CD14-positive monocyte (primary cell): ENCODE measurements at regions of chr11 and their contacts with region 1.

Region 1: DNA sequence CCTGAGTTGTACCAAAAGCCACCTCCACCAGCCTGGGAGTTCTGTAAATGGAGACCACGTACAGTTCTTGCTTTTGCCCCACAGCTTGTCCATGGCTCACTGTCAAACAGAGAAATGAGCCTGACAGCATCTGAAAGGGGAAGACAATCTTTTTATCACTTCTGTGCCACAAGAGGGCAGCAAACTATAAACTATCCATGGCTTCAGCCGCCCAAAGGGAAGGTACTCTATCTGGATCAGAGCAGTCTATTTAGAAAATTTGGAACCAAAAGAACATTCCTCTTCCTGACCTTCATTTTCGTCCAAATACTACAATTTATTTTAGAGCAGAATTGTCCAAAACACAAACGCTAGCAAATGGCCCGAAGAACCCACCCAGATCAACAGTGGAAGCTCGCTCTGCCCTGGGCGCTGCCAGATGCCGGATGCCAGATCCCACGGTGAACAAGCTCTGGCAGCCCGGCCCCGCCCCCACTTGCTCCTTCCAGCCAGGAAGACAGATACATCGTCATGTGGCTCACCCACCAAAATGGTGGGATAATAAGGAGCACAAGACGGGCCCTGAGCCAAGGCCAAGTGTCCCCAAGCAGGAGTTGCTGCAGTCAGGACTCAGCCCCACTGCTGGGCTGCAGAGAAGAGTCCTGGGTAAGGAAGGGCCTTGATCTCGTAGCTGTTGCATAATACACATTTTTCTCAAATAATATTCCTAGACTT is 23.9 kb upstream of the SCGB1A1 start:
- DNase-seq: peak; percentile 59 to 76 (median 69)
- H3K4me3 ChIP-seq: no peak overlapping the region
- H3K4me3 Mint-ChIP-seq: peak overlapping the region in 1 of 2 donors; percentile 52
- H3K27ac ChIP-seq: no peak overlapping the region
- H3K27ac Mint-ChIP-seq: peak overlapping the region in 2 of 7 donors; percentile 0 to 48
- H3K4me1 ChIP-seq: peaks cover 11 to 33% of the 10 kb centered on the region in 2 donors
- H3K4me1 Mint-ChIP-seq: peaks cover 37% of the 10 kb centered on the region
- H3K27me3 ChIP-seq: no peaks in the 10 kb centered on the region
- H3K27me3 Mint-ChIP-seq: peaks cover 0 to 4% (median 0%) of the 10 kb centered on the region in 3 donors
- CTCF ChIP-seq: peak; percentile 77

Region 2: DNA sequence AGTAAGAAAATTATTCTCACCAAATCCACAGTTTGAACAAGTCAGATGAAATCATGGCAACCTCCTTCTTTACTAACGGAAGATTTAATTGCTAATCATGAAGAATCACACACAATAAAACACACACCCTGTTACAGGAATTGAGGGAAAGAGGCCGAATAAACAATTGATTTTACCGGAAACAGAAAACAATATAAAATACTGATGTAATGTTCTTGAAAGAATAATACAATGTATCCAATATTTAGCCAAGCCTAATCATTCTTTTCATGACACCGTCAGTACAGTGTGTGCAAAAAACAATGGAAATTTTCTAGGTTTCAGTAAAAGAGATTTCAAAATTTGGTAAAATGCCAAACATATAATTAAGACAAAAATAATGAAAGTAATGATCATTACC is 34.3 kb before region 1 on chr11:
- intact Hi-C with region 1: no loop called
- DNase-seq: no peak
- H3K4me3 ChIP-seq: no peak overlapping the region
- H3K4me3 Mint-ChIP-seq: no peak overlapping the region
- H3K27ac ChIP-seq: no peak overlapping the region
- H3K27ac Mint-ChIP-seq: no peak overlapping the region
- H3K4me1 ChIP-seq: no peaks in the 10 kb centered on the region
- H3K4me1 Mint-ChIP-seq: no peaks in the 10 kb centered on the region
- H3K27me3 ChIP-seq: no peaks in the 10 kb centered on the region
- H3K27me3 Mint-ChIP-seq: peaks cover 0 to 1% (median 0%) of the 10 kb centered on the region in 3 donors
- CTCF ChIP-seq: no peak

Region 3: GRCh38 chr11:62689421-62690183 is 294.6 kb after region 1 on chr11 and contains the start of gene LRRN4CL:
- intact Hi-C with region 1: loop called (anchors 5 to 10 kb)
- DNase-seq: no peak
- H3K4me3 ChIP-seq: no peak within 1 kb of the TSS
- H3K4me3 Mint-ChIP-seq: peak within 1 kb of the TSS in 1 of 2 donors; percentile 63
- H3K27ac ChIP-seq: no peak within 1 kb of the TSS
- H3K27ac Mint-ChIP-seq: peak within 1 kb of the TSS in 1 of 7 donors; percentile 31
- H3K4me1 ChIP-seq: peaks cover 5 to 8% of the 10 kb centered on the region in 2 donors
- H3K4me1 Mint-ChIP-seq: peaks cover 5% of the 10 kb centered on the region
- H3K27me3 ChIP-seq: peaks cover 9 to 26% of the 10 kb centered on the region in 2 donors
- H3K27me3 Mint-ChIP-seq: peaks cover 26 to 32% (median 29%) of the 10 kb centered on the region in 3 donors
- CTCF ChIP-seq: no peak
- polyA plus RNA-seq, gene LRRN4CL: not detected

Region 4: DNA sequence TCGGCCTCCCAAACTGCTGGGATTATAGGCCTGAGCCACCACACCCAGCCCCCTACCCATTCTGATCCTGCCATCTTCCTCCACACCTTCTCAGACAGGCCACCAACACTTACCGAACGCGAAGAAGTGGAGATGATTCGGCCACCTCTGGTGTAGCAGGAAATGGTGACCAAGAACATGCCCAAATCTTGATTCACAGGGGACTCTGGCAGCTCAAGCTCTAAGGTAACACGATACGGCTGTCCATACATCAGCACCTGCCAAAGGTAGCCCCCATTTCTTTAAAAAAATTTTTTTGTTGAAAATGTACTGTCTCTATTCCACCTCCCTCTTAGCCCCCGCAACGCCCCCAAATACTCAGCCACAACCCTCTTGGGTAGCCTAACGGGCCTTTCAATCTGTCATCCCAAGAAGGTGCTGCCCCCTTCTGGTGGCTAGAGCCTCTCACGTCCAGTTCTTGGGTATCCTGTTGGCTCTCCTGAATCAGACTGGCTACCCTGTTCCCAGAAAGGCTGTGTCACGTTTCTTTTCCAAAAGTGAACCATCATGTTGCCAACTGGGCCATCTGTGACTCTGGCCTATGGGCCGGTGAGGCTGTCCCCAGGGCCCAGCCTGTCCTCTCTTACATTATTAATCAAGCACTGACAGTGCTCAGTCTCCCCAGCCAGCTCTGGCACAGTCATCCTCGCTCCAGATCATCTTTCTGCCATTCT is 299.6 kb after region 1 on chr11:
- intact Hi-C with region 1: loop called (anchors 5 to 10 kb)
- DNase-seq: peak; percentile 66 to 84 (median 79)
- H3K4me3 ChIP-seq: no peak overlapping the region
- H3K4me3 Mint-ChIP-seq: no peak overlapping the region
- H3K27ac ChIP-seq: no peak overlapping the region
- H3K27ac Mint-ChIP-seq: peak overlapping the region in 4 of 7 donors; percentile 3 to 40 (median 21)
- H3K4me1 ChIP-seq: no peaks in the 10 kb centered on the region
- H3K4me1 Mint-ChIP-seq: peaks cover 3% of the 10 kb centered on the region
- H3K27me3 ChIP-seq: no peaks in the 10 kb centered on the region
- H3K27me3 Mint-ChIP-seq: peaks cover 0 to 4% (median 3%) of the 10 kb centered on the region in 3 donors
- CTCF ChIP-seq: peak; percentile 87